GM10248 (cell line): ENCODE measurements at regions of chr1 and their contacts with region 1.

Region 1: DNA sequence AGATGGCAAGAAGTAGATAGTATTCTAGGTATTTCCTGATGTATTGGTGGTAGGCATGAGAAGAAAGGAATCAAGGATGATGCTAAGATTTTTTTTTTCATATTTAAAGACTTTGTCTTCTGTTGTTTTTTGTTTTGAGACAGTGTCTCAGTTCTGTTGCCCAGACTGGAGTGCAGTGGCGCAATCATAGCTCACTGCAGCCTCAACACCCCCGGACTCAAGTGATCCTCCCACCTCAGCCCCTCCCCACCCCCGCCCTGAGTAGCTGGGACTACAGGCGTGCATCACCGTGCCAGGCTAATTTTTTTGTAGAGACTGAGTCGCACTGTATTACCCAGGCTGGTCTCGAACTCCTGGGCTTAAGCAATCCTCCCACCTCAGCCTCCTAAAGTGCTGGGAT is 2.8 kb upstream of the CAPZB start:
- DNase-seq: no peak
- CTCF ChIP-seq: no peak

Region 2: DNA sequence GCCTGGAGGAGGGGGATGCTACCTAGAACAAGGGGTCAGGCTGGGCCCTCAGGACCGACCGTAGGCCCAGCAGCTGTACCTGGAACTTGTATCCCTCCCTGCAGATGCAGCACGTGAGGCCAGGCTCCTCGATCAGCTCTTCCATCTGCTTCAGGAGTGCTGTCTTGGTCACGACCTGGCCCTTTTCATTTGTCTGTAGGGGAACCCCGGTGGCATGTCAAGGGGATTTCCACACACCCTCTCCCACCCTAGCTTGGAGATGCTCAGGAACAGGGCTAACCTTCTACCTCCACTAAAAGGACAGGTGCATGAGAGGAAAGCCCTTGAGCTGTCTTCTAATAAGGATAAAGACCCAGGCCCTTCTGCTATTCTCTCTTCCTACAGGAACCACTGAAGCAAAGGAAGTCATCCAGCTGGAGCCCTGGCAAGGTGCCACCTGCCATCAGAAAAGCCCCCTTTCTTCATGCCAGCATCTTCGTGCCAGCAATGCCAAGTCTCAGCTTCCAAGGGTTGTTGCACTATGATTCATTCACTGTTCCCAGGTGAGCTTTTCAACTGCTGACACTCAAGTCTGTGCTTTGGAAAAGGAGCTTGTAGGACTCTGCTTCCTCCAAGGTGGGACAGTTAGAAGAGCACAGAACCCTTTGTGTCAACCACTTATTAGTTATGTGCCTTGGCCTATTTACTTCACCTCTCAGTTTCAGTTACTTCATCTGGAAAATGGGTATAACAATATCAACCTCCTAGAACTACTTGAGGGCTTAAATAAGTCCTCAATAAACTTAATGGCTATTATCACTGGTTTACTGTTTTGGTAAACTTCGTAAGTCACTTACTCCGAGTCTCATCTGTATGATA is 400.2 kb before region 1 on chr1:
- CTCF ChIA-PET with region 1: no interaction called
- POLR2A ChIA-PET with region 1: no interaction called
- DNase-seq: peak; percentile 55
- CTCF ChIP-seq: no peak

Region 3: GRCh38 chr1:19460535-19461219 is 27.5 kb before region 1 on chr1:
- CTCF ChIA-PET with region 1: interaction called, 10 read pairs
- POLR2A ChIA-PET with region 1: no interaction called
- DNase-seq: no peak
- CTCF ChIP-seq: no peak

Region 4: GRCh38 chr1:19504796-19505692 is 16.9 kb after region 1 on chr1:
- CTCF ChIA-PET with region 1: interaction called, 17 read pairs
- POLR2A ChIA-PET with region 1: no interaction called
- DNase-seq: no peak
- CTCF ChIP-seq: no peak

Region 5: GRCh38 chr1:19511116-19511515 is 23.0 kb after region 1 on chr1:
- CTCF ChIA-PET with region 1: interaction called, 13 read pairs
- POLR2A ChIA-PET with region 1: no interaction called
- DNase-seq: no peak
- CTCF ChIP-seq: no peak

Region 6: DNA sequence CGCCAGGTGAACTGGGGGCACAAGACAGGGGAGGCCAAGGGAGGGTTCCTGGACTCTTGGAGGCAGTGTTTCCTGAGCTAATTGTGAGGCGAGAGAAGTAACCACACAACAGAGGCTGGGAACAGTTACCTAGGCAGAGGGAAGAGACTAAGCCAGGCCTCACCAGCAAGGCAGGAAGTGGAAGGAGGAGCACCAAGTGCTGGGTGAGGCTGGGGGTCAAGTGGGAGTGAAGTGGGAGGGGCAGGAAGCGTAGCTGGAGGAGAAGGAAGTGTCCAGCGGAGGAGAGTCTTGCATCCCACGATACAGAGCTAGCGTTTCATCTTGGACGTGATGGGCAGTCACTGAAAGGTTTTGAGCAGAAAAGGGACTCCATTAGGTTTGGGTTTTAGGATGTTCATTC is 45.5 kb after region 1 on chr1:
- CTCF ChIA-PET with region 1: no interaction called
- POLR2A ChIA-PET with region 1: no interaction called
- DNase-seq: no peak
- CTCF ChIP-seq: no peak